H1 (cell line): ENCODE measurements at regions of chr1 and their contacts with region 1.

Region 1: DNA sequence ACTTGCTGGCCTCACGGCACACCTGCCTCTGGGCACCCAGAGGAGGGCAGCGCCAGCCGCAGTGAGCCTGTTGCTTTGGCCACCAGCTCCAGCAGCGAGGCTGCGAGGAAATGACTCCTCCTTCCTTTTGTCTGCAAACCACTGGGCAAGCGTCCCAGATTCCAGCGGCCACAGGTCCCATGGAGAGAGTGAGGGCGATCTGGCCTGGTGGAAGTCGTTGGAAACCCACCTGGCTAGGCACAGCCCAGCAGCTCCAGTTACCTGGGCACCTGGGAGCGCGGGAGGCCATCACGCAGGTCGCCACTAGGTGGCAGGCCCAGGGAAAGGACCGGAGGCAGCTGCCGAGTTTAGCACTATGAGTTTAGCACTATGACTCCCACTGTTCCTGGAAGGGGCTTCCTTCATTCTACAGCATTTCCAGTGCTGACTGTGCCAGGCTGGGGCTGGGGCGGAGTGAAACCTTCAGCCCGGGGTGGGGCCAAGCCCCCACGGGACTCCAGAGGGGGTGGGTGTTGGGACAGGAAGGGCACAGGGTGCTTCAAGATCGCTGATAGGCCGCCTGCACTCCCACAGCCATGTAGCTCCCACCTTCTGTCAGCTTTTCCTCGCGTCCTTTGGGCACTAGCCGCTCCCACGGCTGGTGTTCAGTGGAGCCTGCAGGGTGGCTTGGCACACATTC is 1.1 kb upstream of the ESPN start:
- DNase-seq: peak; percentile 57 to 92
- H3K4me3 ChIP-seq: peak overlapping the region in 3 of 4 experiments; percentile 15 to 52 (median 19); a peak in 5 of 8 replicates
- H3K27ac ChIP-seq: no peak overlapping the region
- H3K4me1 ChIP-seq: peaks cover 0 to 30% (median 11%) of the 10 kb centered on the region in 4 experiments; a peak in 5 of 7 replicates
- H3K27me3 ChIP-seq: peaks cover 63 to 87% (median 79%) of the 10 kb centered on the region in 4 experiments
- CTCF ChIP-seq: peak in 2 of 3 experiments; percentile 95 to 96; a peak in 3 of 4 replicates
- EP300 ChIP-seq: no peak
- POLR2A ChIP-seq: no peak
- RAD21 ChIP-seq: peak; percentile 54 to 69

Region 2: GRCh38 chr1:6108937-6109614 is 314.4 kb before region 1 on chr1:
- CTCF ChIA-PET with region 1: no interaction called
- POLR2A ChIA-PET with region 1: no interaction called
- DNase-seq: peak in 1 of 2 experiments; percentile 41
- H3K4me3 ChIP-seq: no peak overlapping the region
- H3K27ac ChIP-seq: no peak overlapping the region
- H3K4me1 ChIP-seq: peaks cover 0 to 4% (median 3%) of the 10 kb centered on the region in 4 experiments; a peak in 2 of 7 replicates
- H3K27me3 ChIP-seq: no peaks in the 10 kb centered on the region; a peak in 1 of 7 replicates
- CTCF ChIP-seq: peak; percentile 61 to 77 (median 68)
- EP300 ChIP-seq: no peak
- POLR2A ChIP-seq: no peak
- RAD21 ChIP-seq: peak; percentile 79 to 83

Region 3: DNA sequence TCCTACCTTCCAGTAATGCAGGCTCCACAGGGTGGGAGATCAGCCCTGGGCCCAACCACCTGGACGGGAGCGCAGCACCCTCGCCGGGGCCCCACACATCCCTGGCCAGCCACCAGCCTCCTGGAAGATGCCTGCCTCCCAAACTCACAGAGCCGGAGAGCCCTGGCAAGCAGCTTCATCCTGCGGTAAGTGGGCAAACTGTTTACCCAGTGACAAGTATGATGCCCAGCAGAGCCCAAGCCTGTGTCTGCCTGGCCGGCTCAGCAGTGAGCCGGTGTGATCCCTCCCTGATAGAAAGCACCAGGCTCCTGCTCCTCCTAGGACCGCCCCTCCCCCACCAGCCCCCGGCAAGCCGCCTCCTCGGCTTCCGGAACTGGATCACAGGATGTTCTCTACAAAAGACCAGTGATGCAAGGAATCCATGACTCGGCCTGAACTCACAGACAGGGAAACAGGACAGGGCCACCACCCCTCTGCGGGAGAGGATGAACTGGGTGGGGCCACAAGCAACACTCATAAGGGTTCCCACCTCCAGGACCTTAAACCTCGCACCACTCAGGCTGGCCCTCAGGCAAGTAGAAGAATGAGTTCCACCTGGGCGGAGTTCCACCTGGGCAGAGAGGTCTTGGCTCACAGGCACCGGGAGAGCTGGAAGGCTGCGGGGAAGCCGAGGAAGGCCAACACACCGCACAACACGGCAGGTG is 37.8 kb before region 1 on chr1:
- CTCF ChIA-PET with region 1: interaction called, 1,769 read pairs
- POLR2A ChIA-PET with region 1: interaction called, 8 read pairs
- DNase-seq: peak; percentile 78 to 88
- H3K4me3 ChIP-seq: peak overlapping the region in 3 of 4 experiments; percentile 25 to 42 (median 36); a peak in 5 of 8 replicates
- H3K27ac ChIP-seq: peak overlapping the region; percentile 83
- H3K4me1 ChIP-seq: peaks cover 14 to 26% (median 19%) of the 10 kb centered on the region in 4 experiments
- H3K27me3 ChIP-seq: no peaks in the 10 kb centered on the region
- CTCF ChIP-seq: no peak
- EP300 ChIP-seq: peak in 1 of 2 experiments; percentile 79; a peak in 1 of 3 replicates
- POLR2A ChIP-seq: peak; percentile 33 to 56; a peak in 2 of 3 replicates
- RAD21 ChIP-seq: no peak

Region 4: DNA sequence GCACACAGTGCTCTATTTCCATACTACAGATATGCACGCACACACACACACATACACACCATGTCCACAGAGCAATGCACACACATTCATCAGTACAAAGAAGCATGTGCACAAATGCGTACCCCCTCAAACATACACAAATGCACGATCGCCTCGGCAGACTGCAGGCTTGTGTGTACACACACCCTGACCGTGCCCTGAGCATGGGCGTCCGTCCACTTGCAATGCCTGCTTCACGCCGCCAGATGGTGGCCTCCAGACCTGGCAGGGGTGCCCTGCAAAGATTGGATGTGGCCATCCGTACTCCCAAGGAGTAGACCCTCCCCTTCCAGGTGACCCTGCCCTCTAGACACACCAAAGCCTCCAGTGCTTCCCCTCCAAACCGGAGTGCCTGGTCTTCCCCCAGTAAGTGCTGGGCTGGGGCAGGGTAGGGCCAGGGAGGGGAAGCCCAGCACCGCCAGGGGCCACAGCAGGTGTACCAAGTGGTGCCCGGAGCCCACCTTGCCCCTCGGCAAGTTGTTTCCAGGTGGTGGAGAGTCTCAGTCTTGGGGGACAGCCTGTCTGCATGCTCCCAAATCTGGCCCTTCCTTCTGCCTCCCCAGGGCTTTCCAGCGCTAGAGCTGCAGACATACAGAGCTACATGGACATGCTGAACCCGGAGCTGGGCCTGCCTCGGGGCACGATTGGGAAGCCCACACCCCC is 21.8 kb after region 1 on chr1:
- CTCF ChIA-PET with region 1: interaction called, 321 read pairs
- POLR2A ChIA-PET with region 1: interaction called, 15 read pairs
- DNase-seq: no peak
- H3K4me3 ChIP-seq: no peak overlapping the region
- H3K27ac ChIP-seq: no peak overlapping the region
- H3K4me1 ChIP-seq: peaks cover 3 to 29% (median 18%) of the 10 kb centered on the region in 4 experiments
- H3K27me3 ChIP-seq: peaks cover 0 to 16% (median 11%) of the 10 kb centered on the region in 4 experiments; a peak in 5 of 7 replicates
- CTCF ChIP-seq: peak; percentile 66 to 77 (median 67)
- EP300 ChIP-seq: no peak
- POLR2A ChIP-seq: no peak
- RAD21 ChIP-seq: peak; percentile 34 to 41

Region 5: DNA sequence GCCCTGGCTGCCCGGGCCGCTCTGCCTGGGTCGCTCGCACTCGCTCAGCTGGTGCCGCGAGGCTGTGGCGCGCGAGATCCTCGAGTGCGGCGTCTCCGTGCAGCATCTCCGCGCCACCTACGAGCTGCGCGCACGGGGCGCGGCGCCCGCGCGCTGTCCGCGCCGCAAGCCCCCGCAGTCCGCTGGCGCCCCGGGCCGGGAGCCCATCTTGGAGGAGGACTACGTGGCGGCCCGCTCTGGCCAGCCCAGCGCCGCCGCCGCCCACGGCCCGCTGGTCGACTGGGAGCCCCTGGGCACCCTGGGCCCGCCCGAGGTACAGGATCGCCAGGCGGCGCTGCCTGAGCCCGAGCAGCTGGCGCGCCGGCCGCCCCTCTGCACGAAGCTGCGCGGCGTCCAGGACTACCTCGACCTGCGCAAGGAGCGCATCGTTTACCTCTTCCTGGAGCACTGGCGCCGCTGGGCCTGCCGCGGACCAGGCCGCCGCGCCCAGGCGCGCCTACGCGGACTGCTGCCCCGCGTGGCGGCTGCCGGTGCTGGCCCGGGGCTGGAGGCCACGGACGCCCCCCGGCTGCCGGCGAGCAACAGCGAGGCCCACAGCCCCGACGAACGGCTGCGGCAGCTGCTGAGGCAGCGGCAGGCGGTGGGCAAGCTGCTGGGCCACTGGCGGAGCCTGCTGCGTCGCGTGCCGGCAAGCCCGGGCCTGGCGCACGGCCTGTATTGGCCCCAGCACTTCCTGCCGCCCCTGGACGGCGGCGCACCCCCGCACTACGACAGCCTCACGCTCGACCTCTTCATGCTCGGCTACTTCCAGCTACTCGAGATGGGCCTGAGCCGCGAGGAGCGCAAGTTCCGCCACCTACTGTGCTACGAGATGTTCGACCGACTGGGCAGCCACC is 31.6 kb after region 1 on chr1:
- CTCF ChIA-PET with region 1: interaction called, 13 read pairs
- POLR2A ChIA-PET with region 1: interaction called, 3 read pairs
- DNase-seq: no peak
- H3K4me3 ChIP-seq: peak overlapping the region in 1 of 4 experiments; percentile 44; a peak in 2 of 8 replicates
- H3K27ac ChIP-seq: no peak overlapping the region
- H3K4me1 ChIP-seq: peaks cover 0 to 20% (median 10%) of the 10 kb centered on the region in 4 experiments; a peak in 5 of 7 replicates
- H3K27me3 ChIP-seq: peaks cover 5 to 37% (median 21%) of the 10 kb centered on the region in 4 experiments; a peak in 6 of 7 replicates
- CTCF ChIP-seq: peak in 2 of 3 experiments; percentile 49 to 82; a peak in 3 of 4 replicates
- EP300 ChIP-seq: no peak
- POLR2A ChIP-seq: no peak
- RAD21 ChIP-seq: peak in 1 of 2 experiments; percentile 3; a peak in 1 of 4 replicates

Region 6: DNA sequence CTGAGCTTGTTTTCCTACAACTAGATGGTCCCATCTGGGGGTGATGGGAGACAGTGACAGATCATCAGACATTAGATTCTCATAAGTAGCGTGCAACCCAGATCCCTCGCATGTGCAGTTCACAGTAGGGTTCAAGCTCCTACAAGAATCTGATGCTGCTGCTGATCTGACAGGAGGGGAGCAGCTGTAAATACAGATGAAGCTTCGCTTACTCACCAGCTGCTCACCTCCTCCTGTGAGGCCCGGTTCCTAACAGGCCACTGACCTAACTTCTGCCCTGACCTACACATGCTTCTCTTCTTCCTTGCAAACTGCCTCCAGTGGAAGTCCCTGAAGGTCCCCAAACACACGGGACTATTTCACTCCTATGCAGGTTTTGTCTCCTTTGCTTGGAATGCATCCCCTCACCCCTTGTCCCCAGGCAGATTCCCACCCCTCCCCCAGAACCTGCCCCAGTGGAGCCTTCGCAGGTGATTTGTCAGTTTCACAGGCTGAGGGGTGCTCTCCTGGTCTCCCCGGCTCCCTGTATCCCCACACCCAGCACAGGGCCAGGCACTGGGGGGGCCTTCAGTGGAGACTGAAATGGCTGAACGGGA is 150.7 kb after region 1 on chr1:
- CTCF ChIA-PET with region 1: no interaction called
- POLR2A ChIA-PET with region 1: no interaction called
- DNase-seq: no peak
- H3K4me3 ChIP-seq: no peak overlapping the region
- H3K27ac ChIP-seq: no peak overlapping the region
- H3K4me1 ChIP-seq: peaks cover 0 to 9% (median 6%) of the 10 kb centered on the region in 4 experiments; a peak in 6 of 7 replicates
- H3K27me3 ChIP-seq: peaks cover 0 to 2% (median 0%) of the 10 kb centered on the region in 4 experiments; a peak in 3 of 7 replicates
- CTCF ChIP-seq: no peak
- EP300 ChIP-seq: no peak
- POLR2A ChIP-seq: no peak
- RAD21 ChIP-seq: no peak

Region 7: DNA sequence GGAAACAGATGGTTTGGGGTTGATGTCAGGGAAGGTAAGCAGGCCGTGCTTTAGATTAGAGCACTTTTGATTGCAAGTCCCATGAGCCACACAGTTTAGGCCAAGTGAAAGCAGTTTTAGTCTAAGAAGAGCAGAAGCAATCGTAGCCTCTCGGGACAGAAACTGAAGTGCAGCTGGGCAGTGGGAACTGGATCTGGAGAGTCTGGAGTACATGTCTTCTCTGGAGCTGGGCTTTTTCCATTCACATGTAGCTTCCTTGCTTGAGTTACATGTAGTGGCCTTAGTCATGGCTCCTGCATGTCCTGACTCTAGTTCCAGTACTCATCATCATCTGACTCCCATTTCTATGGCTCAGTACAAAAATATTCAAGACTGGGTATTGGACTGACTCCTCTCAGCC is 378.5 kb after region 1 on chr1:
- CTCF ChIA-PET with region 1: no interaction called
- POLR2A ChIA-PET with region 1: no interaction called
- DNase-seq: no peak
- H3K4me3 ChIP-seq: no peak overlapping the region
- H3K27ac ChIP-seq: no peak overlapping the region
- H3K4me1 ChIP-seq: peaks cover 0 to 3% (median 1%) of the 10 kb centered on the region in 4 experiments; a peak in 3 of 7 replicates
- H3K27me3 ChIP-seq: no peaks in the 10 kb centered on the region
- CTCF ChIP-seq: no peak
- EP300 ChIP-seq: no peak
- POLR2A ChIP-seq: no peak
- RAD21 ChIP-seq: no peak